ENCODE measurements at regions of chr17 and their contacts with region 1.

Region 1: DNA sequence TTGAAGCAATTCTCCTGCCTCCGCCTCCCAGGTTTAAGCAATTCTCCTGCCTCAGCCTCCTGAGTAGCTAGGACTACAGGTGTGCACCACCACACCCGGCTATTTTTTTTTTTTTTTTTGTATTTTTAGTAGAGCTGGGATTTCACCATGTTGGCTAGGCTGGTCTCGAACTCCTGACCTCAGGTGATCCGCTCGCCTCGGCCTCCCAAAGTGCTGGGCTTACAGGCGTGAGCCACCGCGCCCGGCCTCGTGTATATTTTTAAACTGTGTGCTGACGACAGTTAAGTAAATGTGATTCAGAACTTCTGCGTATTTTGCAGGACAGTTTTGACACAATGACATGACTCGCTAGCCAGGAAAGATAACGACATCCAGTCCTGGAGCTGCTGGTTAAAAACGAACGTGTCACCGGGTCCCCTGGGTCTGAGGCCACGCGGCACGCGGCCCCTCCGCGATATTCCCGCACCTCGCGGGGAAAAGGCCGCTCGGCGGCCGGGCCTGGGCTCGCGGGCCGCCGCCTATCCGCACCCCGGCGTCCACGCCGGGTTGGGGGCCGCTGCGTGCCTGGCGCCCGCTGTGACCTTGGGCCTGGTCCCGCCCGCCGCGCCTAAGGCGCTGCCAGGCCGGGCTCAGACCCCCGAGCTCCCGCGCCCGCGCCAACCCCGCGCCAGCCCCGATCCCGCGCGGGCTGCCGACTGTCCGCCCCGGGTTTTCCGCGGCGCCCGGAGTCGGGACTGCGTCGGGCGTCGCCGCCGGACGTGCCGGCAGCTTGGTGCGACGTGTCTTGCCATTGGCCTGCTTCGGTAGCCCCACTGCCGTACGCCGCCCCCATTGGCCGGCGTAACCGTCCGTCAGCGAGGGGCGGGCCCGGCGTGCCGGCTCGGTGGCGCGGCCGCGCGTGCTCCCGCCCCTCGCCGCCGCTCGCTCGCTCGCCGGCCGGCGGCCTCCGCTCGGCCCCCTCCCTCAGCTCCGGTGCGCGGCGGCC is at the start of gene FOXK2:
- DNase-seq: peak; percentile 90 to 98 (median 95)
- H3K4me3 ChIP-seq: peak within 1 kb of the TSS; percentile 68 to 78
- H3K4me3 Mint-ChIP-seq: peak within 1 kb of the TSS; percentile 86 to 99 (median 90)
- H3K27ac ChIP-seq: peak within 1 kb of the TSS; percentile 80
- H3K27ac Mint-ChIP-seq: peak within 1 kb of the TSS; percentile 87 to 96 (median 91)
- H3K4me1 ChIP-seq: peaks cover 42% of the 10 kb centered on the region
- H3K4me1 Mint-ChIP-seq: peaks cover 15 to 30% (median 21%) of the 10 kb centered on the region in 4 donors
- H3K27me3 ChIP-seq: no peaks in the 10 kb centered on the region
- H3K27me3 Mint-ChIP-seq: no peaks in the 10 kb centered on the region
- total RNA-seq, gene FOXK2: 51.5 to 57.5 TPM

Region 2: DNA sequence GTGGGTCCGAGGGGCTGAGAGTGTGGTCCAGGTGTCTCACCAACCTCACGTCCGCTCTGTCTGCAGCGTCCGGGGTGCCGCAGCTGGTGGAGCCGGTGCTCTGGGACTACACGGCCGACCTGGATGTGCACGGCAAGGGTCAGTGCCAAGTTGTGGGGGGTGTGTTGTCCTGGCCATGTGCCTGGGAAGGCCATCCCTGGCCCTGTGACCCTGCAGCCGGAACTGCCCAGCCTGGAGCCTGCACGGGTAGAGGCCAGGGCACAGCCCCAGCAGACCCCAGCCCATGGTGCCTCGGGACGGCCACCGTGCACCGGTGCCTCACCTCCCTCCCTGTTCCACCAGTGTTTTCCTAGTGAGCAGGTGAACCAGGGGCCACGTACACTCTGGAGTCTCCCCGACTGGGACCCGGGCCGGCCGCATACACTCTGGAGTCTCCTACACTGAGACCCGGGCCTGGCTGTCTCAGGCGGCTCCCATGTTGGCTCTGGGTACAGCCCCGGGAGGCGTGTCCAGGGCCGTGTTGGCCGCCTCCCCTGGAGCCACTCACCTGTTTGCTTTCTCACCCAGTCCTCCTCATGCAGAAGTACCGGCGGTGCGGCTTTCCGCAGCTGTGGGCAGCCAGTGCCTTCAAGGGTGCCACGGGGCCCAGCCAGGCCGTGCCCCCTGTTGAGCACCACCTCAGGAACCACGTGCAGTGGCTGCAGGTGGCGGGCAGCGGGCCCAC is 82.4 kb before region 1 on chr17:
- CTCF ChIA-PET with region 1: no interaction called
- POLR2A ChIA-PET with region 1: no interaction called
- intact Hi-C with region 1: no loop called
- DNase-seq: no peak
- H3K4me3 ChIP-seq: no peak overlapping the region
- H3K4me3 Mint-ChIP-seq: no peak overlapping the region
- H3K27ac ChIP-seq: no peak overlapping the region
- H3K27ac Mint-ChIP-seq: no peak overlapping the region
- H3K4me1 ChIP-seq: peaks cover 9% of the 10 kb centered on the region
- H3K4me1 Mint-ChIP-seq: peaks cover 0 to 20% (median 4%) of the 10 kb centered on the region in 4 donors
- H3K27me3 ChIP-seq: no peaks in the 10 kb centered on the region
- H3K27me3 Mint-ChIP-seq: no peaks in the 10 kb centered on the region

Region 3: DNA sequence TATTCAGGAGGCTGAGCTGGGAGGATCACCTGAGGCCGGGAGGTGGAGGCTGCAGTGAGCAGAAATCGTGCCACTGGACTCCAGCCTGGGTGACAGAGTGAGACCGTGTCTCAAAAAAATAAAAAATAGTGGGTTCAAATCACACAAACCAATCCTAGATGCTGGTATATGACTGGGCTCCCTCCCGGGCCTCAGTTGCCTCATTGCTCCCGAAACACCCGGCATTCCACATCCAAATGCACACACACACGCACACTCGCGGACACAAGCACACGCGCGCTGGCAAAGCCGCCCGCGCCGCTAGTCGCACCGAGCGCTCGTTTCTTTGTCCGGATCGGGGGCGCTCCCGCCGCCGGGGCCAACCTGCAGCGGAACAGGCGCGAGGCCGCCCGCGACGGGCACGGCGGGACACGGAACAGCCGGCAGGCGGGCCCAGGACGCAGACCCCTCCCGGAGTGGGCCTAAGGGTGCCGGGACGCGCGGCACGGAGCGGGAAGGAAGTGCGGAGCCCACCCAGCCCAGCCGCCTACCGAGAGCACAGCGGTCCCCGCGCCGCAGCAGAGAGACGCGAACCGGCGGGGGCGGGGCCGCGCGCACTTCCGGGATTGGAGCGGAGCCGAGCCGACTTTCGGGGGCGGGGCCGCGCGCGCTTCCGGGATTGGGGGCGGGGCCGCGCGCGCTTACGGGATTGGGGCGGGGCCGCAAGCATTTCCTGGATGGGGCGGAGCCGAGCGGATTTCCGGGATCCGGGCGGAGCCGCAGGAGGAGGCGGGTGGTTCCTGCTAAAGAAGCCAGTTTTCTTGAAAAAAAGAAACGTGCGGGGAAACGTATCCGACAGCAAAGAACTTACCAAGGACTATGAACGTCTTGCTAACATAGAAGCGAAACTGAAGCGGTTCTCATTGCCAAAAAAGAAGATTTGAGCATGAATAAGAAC is 68.7 kb before region 1 on chr17 and contains the start of gene CYBC1:
- CTCF ChIA-PET with region 1: no interaction called
- POLR2A ChIA-PET with region 1: interaction called, 20 read pairs
- intact Hi-C with region 1: no loop called
- DNase-seq: peak; percentile 90 to 93 (median 93)
- H3K4me3 ChIP-seq: peak within 1 kb of the TSS; percentile 86 to 95
- H3K4me3 Mint-ChIP-seq: peak within 1 kb of the TSS; percentile 86 to 98 (median 94)
- H3K27ac ChIP-seq: peak within 1 kb of the TSS; percentile 86
- H3K27ac Mint-ChIP-seq: peak within 1 kb of the TSS; percentile 93 to 99 (median 96)
- H3K4me1 ChIP-seq: peaks cover 45% of the 10 kb centered on the region
- H3K4me1 Mint-ChIP-seq: peaks cover 22 to 48% (median 30%) of the 10 kb centered on the region in 4 donors
- H3K27me3 ChIP-seq: no peaks in the 10 kb centered on the region
- H3K27me3 Mint-ChIP-seq: no peaks in the 10 kb centered on the region
- total RNA-seq, gene CYBC1: 236 to 249 TPM

Region 4: DNA sequence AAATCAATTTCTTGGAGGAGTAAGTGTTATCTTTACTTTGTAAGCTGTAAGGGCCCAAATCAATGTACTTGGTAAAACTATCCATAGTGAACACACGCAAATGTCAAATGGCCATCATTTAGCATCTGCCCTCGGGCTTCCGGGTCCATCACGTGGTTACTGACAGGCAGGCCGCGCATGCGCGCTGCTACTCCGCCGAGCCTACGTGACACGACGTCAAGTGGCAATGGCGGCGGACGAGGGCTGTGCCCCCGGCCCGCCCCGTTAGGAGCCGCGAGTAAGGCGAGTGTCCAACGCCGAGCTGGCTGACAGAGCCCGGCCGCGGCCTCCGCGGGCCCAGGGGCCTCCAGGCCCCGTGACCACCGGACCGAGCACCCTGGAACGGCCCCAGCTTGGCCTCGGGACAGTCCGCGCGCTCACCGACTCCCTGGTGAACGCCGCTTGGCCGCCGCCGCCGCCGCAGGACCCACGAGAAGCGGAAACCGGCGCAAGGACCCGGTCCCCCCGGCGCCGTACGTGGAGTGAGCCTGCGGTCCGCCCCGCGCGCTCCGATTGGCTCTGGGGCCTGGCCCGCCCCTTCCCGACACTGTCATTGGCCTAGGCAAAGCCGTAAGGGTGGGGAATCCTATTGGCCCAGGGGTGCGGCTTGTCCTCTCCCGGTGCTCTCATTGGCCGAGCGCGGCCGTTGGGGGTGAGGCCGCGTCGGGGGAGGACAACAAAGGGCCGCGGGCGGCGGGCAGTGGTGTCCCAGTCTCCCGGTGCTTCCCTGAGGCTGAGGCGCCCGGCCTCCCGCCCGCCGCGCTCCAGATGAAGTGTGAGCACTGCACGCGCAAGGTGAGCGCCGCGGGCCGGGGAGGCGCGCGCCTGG is 60.9 kb before region 1 on chr17 and contains the start of gene NARF:
- CTCF ChIA-PET with region 1: no interaction called
- POLR2A ChIA-PET with region 1: interaction called, 13 read pairs
- intact Hi-C with region 1: loop called (anchors 1 kb)
- DNase-seq: peak; percentile 95 to 97 (median 97)
- H3K4me3 ChIP-seq: peak within 1 kb of the TSS; percentile 29 to 59
- H3K4me3 Mint-ChIP-seq: peak within 1 kb of the TSS; percentile 84 to 96 (median 92)
- H3K27ac ChIP-seq: peak within 1 kb of the TSS; percentile 94
- H3K27ac Mint-ChIP-seq: peak within 1 kb of the TSS; percentile 94 to 100 (median 97)
- H3K4me1 ChIP-seq: peaks cover 31% of the 10 kb centered on the region
- H3K4me1 Mint-ChIP-seq: peaks cover 19 to 36% (median 26%) of the 10 kb centered on the region in 4 donors
- H3K27me3 ChIP-seq: no peaks in the 10 kb centered on the region
- H3K27me3 Mint-ChIP-seq: no peaks in the 10 kb centered on the region
- total RNA-seq, gene NARF: 80.8 to 82.9 TPM